ENCODE measurements at regions of chr11 and their contacts with region 1.

Region 1: DNA sequence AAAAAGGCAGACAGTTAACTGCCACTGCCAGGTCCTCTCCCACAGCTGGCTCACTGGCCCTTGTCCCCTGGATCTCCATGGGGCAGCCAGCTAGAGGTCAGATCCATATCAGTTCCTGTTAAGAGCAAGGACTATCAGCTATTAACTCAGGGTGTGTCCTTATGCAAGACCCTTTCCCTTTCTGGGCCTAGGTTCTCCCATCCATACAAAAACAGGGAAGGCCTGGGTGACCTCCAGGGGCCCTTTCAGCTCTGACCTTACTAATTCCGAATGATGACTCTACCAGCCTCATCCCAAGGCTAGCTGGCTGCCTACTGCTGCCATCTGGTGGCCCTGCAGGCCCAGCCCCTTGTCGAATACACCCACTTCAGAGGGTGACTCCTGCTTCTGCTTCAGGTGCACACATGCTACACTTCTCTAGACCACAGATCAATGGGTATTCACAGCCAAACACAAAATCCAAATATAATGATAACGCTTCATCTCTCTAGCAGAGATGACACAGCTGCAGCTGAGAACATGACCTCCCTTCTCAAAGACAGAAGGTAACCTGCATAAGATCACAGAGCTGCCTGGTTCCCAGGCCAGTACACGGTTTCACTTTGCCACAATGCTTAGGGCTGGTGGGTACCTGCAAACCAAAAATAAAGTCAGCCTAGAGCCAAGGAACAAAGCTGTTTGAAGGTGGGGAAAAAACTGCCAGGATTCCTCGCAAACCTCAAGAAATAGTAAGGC is 34.1 kb downstream of the SERGEF start:
- DNase-seq: peak; percentile 73
- H3K4me3 ChIP-seq: no peak overlapping the region
- H3K27ac ChIP-seq: no peak overlapping the region
- H3K4me1 ChIP-seq: no peaks in the 10 kb centered on the region
- H3K27me3 ChIP-seq: no peaks in the 10 kb centered on the region

Region 2: DNA sequence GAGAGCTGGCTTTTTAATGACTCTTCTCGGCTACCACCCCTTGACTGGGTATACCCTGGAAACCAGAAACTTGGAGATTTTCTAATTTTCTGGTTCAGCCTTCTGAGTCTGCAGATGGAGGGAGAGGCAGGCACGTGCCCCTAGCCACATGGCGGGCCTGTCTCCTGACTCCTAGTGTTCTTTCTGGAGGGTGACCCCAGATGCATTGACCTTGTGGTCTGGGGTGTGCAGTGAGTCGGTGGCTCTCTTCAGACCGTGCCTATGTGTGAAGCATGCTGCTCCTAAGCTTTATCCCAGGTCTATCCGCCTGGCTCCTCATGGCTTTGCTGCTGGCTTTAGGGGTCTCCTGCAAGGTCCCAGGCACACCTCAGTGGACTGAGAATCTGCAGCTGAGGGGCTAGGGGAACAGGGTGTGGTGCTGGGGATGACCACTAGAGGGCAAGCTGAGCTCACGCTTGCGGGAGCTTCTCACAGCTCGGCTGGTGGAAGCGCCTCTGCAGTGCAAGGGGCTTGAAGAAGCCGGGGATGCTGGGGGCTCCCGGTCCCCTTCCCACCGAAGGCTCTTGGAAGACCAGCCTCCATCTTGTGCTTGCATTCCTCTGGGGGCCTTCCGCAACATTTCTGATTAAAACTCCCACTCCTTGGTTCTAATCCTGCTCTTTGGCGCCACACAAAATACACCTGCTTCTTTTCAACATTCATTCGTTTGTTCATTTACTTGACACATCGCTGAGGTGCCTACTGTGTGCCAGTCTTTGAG is 379.8 kb before region 1 on chr11:
- in situ Hi-C with region 1: loop called (anchors 10 kb)
- DNase-seq: peak; percentile 75
- H3K4me3 ChIP-seq: no peak overlapping the region
- H3K27ac ChIP-seq: no peak overlapping the region
- H3K4me1 ChIP-seq: no peaks in the 10 kb centered on the region
- H3K27me3 ChIP-seq: no peaks in the 10 kb centered on the region

Region 3: GRCh38 chr11:17750013-17750800 is 228.5 kb before region 1 on chr11:
- in situ Hi-C with region 1: loop called (anchors 10 kb)
- DNase-seq: no peak
- H3K4me3 ChIP-seq: no peak overlapping the region
- H3K27ac ChIP-seq: no peak overlapping the region
- H3K4me1 ChIP-seq: no peaks in the 10 kb centered on the region
- H3K27me3 ChIP-seq: peaks cover 12% of the 10 kb centered on the region; the same call in 1 of the 2 replicates

Region 4: GRCh38 chr11:17864478-17864941 is 114.2 kb before region 1 on chr11:
- in situ Hi-C with region 1: no loop called
- DNase-seq: no peak
- H3K4me3 ChIP-seq: no peak overlapping the region
- H3K27ac ChIP-seq: no peak overlapping the region
- H3K4me1 ChIP-seq: no peaks in the 10 kb centered on the region; the same call in 1 of the 2 replicates
- H3K27me3 ChIP-seq: no peaks in the 10 kb centered on the region

Region 5: GRCh38 chr11:17927681-17928347 is 50.9 kb before region 1 on chr11:
- in situ Hi-C with region 1: no loop called
- DNase-seq: peak; percentile 67
- H3K4me3 ChIP-seq: no peak overlapping the region
- H3K27ac ChIP-seq: no peak overlapping the region
- H3K4me1 ChIP-seq: peaks cover 5% of the 10 kb centered on the region
- H3K27me3 ChIP-seq: no peaks in the 10 kb centered on the region

Region 6: DNA sequence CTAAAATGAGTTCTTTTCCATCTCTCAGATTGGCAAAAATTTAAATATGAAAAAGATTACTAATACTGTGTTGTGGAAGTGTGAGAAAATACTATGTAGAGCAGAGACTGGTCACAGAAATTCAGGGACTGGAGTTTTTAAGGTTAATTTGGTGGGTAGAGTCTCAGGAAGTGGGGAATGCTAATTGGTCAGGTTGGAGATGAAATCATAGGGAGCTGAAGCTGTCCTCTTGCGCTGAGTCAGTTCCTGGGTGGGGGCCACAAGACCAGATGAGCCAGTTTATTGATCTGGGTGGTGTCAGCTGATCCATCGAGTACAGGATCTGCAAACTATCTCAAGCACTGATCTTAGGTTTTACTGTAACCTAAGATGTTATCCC is 690.5 kb after region 1 on chr11:
- in situ Hi-C with region 1: no loop called
- DNase-seq: peak; percentile 22
- H3K4me3 ChIP-seq: no peak overlapping the region
- H3K27ac ChIP-seq: no peak overlapping the region
- H3K4me1 ChIP-seq: no peaks in the 10 kb centered on the region
- H3K27me3 ChIP-seq: no peaks in the 10 kb centered on the region; the same call in 1 of the 2 replicates